GM13976 (cell line): ENCODE measurements at regions of chr10 and their contacts with region 1.

Region 1: GRCh38 chr10:78047314-78047891 is 13.7 kb downstream of the RPS24 start:
- DNase-seq: peak; percentile 70
- CTCF ChIP-seq: peak; percentile 76

Region 2: DNA sequence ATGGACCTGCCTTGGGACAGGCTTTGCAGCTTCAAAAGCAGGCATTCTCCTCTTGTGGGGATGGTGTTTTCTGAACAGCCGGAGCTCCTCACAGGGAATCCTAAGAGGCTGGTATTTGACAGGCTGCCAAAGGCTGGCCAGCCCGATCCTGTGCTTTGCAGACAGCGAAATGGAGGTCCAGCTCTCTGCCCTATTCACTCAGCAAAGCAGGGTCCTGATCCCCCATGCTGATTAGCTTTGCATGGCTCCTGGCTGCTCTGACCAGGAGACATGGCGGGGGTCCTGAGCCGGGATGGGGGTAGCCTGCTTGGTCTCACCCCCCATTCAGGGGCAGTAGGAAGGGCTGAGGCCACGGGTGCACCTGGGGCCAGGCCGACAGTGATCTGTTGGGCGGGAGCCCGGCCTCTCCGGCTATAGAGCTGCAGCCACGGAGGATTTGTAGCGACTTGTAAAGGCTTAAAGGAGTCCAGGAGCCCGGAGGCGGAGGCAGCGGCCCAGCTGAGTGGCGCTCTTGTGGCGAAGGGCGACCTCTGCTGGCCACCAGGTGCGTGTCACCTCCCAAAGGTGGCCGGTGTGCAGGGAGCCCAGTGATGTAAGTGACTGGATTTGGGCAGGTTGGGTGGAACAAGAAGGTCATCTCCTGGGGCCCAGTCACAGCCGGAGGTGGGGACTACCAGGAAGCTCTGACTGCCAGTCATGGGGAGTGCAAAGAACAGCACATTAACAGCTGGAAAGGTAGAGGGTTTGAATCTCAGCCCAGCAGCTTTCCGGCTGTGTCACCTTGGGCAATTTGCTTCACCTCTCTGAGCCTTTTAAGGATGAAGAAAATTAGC is 1147.9 kb after region 1 on chr10:
- in situ Hi-C with region 1: loop called (anchors 10 kb)
- DNase-seq: peak; percentile 90
- CTCF ChIP-seq: peak; percentile 95